Panc1 (cell line): ENCODE measurements at regions of chr19 and their contacts with region 1.

Region 1: GRCh38 chr19:771332-771785 is 20.4 kb downstream of the MISP start:
- DNase-seq: no peak
- ATAC-seq: peak; percentile 82
- H3K4me3 ChIP-seq: no peak overlapping the region
- H3K27ac ChIP-seq: no peak overlapping the region
- H3K4me1 ChIP-seq: peaks cover 6% of the 10 kb centered on the region
- H3K27me3 ChIP-seq: no peaks in the 10 kb centered on the region
- CTCF ChIP-seq: no peak; the same call in 1 of the 2 replicates

Region 2: GRCh38 chr19:913080-913748 is 141.9 kb after region 1 on chr19 and contains the start of gene R3HDM4:
- CTCF ChIA-PET with region 1: no interaction called
- POLR2A ChIA-PET with region 1: no interaction called
- in situ Hi-C with region 1: no loop called
- intact Hi-C with region 1: loop called (anchors 10 kb)
- DNase-seq: no peak
- ATAC-seq: peak; percentile 91
- H3K4me3 ChIP-seq: peak within 1 kb of the TSS; percentile 57 to 63
- H3K27ac ChIP-seq: peak within 1 kb of the TSS; percentile 76
- H3K4me1 ChIP-seq: peaks cover 3% of the 10 kb centered on the region; the same call in 1 of the 2 replicates
- H3K27me3 ChIP-seq: no peaks in the 10 kb centered on the region
- CTCF ChIP-seq: no peak
- total RNA-seq, gene R3HDM4: 43.5 TPM